ENCODE measurements at regions of chr15 and their contacts with region 1.

Region 1: GRCh38 chr15:38440353-38441129 is 13.4 kb upstream of the FAM98B start:
- DNase-seq: peak; percentile 86
- H3K4me3 Mint-ChIP-seq: no peak overlapping the region
- H3K27ac Mint-ChIP-seq: peak overlapping the region; percentile 32
- H3K4me1 Mint-ChIP-seq: peaks cover 9% of the 10 kb centered on the region
- H3K27me3 Mint-ChIP-seq: peaks cover 42% of the 10 kb centered on the region

Region 2: DNA sequence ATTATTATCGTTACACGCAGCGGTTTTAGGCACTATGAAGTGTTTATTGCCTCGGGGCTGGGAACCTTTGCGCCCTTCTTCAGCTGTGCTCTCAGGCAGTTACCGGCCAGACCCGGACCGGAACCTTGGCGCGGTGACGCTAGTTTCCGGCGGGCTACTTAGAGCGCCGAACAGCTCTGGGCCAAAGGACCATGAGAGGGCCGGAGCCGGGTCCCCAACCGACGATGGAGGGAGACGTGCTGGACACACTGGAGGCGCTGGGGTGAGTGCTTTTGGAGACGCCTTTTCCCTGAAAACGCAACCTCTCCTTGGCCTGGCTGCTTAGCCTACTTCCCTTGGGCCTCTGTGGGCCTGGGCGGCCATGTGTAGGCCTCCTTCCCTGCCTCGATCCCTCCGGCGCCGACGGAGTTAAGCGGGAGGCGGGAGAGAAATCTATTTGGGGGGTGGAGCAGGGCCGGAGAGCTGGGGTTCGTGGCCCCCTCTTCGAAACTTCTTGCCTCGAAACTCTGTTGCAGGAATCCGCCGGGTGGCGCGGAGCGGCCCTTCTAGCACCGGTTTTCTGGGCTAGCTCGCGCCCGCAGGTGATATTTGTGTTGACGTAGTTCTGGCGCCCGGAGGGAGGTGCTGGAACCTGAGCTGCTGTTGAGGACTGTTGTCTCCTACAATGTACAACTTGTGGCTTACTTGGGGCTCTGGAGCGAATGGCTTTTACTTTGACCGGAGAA is 13.6 kb after region 1 on chr15 and contains the start of gene FAM98B:
- intact Hi-C with region 1: loop called (anchors 1 kb)
- DNase-seq: peak; percentile 97
- H3K4me3 Mint-ChIP-seq: peak within 1 kb of the TSS; percentile 94
- H3K27ac Mint-ChIP-seq: peak within 1 kb of the TSS; percentile 95
- H3K4me1 Mint-ChIP-seq: peaks cover 27% of the 10 kb centered on the region
- H3K27me3 Mint-ChIP-seq: peaks cover 27% of the 10 kb centered on the region
- total RNA-seq, gene FAM98B: 64.0 and 71.6 TPM in 2 replicates

Region 3: DNA sequence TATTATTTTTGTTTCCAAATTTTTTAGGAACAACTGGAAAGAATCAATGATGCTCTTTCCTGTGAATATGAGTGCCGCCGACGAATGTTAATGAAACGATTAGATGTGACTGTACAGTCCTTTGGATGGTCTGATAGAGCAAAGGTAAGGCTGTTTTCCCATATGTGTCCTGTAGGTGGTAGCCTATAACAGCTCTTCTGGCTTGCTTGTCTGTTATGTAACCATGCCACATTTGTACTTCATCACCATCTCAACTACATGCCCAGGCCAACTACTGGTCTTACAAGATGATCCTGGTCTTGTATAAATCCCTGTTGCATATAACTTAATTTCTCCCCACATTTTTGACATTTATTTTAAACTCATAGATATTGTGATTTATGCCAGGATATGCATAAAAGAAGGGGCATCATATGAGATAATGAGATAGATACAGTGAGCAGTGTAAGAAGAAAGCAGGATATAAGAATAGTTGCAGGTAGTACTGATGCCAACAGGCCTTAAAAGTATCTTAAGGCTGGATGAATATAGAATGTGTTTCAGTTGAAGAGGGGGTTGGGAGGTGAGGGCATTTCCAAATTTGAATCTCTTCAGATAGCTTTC is 33.7 kb after region 1 on chr15:
- intact Hi-C with region 1: no loop called
- DNase-seq: peak; percentile 85
- H3K4me3 Mint-ChIP-seq: no peak overlapping the region
- H3K27ac Mint-ChIP-seq: no peak overlapping the region
- H3K4me1 Mint-ChIP-seq: peaks cover 13% of the 10 kb centered on the region
- H3K27me3 Mint-ChIP-seq: no peaks in the 10 kb centered on the region

Region 4: GRCh38 chr15:38699633-38700230 is 259.2 kb after region 1 on chr15:
- intact Hi-C with region 1: loop called (anchors 1 kb)
- DNase-seq: peak; percentile 92
- H3K4me3 Mint-ChIP-seq: no peak overlapping the region
- H3K27ac Mint-ChIP-seq: peak overlapping the region; percentile 65
- H3K4me1 Mint-ChIP-seq: peaks cover 57% of the 10 kb centered on the region
- H3K27me3 Mint-ChIP-seq: no peaks in the 10 kb centered on the region

Measured in activated CD4-positive, alpha-beta T cell treated with anti-CD3 and anti-CD28 coated beads, Interleukin-2, amount 10 ng/mL, durations not matched to agents 24 days and 14 days (primary cell).